Right ventricle myocardium inferior (tissue), 1 donor: ENCODE measurements at regions of chr6 and their contacts with region 1.

Region 1: DNA sequence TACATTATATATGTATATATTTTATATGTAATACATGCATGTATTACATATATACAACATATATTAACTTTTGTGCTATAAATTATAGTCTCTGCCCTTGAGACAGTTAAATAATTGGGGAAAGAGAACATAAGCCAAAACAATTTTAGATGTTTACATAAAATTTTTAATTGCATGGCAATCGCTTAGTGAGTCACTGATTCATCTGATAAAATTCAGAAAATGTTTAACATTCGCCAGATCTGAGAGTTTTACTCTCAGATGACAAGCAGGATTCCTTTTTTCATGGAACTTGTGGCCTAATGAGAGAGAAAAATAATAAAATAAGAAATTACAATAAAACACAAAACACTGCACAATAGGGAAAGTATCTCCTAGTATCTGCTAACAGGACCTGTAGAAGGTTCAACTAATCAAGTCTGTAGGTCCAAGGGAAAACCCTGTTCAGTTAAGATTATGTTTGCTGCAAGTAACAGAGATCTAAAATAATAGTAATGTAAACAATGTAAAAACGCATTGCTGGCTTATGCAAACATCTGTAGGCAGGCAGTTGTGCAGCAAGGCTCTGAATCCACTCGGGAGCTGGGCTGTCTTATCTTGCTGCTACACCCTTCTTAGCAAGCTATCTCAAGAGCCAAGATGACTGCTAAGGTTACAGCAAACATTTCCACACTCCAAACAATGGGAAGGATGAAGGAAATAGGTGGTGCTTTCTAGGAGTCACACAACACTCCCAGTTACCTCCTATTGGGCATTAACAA is 397.5 kb upstream of the NRSN1 start:
- DNase-seq: no peak
- ATAC-seq: no peak

Region 2: GRCh38 chr6:23690453-23691430 is 37.8 kb before region 1 on chr6:
- intact Hi-C with region 1: no loop called
- DNase-seq: no peak
- ATAC-seq: no peak

Region 3: GRCh38 chr6:23713211-23713610 is 15.3 kb before region 1 on chr6:
- intact Hi-C with region 1: loop called (anchors 1 kb)
- DNase-seq: no peak
- ATAC-seq: no peak